Activated naive CD4-positive, alpha-beta T cell treated with anti-CD3 and anti-CD28 coated beads for 36 hours (primary cell): ENCODE measurements at regions of chr11 and their contacts with region 1.

Region 1: DNA sequence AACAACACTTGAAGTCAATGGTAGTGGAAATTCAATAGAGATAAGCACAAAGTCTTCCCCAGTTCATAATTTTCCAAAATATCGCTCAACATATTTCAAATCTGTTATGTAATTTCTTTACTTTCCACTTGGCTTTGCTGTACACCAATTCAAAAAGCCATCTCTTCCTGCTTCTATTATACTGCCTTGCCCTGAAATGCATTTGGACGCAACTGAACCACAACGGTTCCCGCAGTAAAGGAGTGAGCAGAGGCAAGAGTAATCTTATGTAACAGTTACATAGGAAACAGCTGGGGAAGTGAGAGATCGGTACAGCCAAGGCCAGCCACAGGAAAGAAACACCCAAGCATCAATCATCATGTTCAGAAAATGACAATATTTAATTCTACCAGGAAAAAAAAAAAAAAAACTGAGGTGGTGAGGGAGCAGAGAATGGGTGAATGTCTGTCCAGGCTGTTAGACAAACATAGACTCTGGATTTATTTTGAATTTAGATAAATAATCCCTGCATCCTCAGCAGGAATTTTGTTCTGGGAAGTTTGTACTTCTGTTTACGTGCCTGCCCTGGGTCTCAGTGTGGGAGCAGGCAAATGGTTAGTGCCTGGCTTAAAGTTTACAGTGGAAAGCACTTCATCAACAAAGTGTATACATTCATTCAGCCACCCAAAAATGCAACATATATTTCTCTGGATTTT is 392.2 kb downstream of the ETS1 start:
- DNase-seq: peak; percentile 77
- H3K4me3 Mint-ChIP-seq: peak overlapping the region; percentile 6
- H3K27ac Mint-ChIP-seq: peak overlapping the region; percentile 32
- H3K4me1 Mint-ChIP-seq: peaks cover 42% of the 10 kb centered on the region
- H3K27me3 Mint-ChIP-seq: no peaks in the 10 kb centered on the region

Region 2: DNA sequence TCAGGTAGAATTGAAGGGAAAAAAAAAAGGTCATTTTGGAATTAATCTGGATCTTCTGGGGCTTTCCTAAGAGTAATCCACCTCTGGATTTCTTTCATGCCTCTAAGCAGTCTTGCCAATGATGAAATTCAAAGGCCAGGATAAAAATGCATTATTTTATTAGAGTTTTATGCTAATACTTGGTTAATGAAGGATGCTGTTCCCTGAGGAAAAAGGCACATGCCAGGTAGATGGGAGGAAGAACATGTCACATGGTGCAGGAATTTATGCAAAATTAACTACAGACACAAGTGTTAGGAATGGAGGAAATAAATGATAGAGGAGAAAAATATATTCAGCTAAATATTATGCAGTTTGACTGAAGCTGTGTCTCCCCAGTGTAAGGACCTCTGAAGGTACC is 399.9 kb before region 1 on chr11:
- CTCF ChIA-PET with region 1: no interaction called
- intact Hi-C with region 1: no loop called
- DNase-seq: no peak
- H3K4me3 Mint-ChIP-seq: no peak overlapping the region
- H3K27ac Mint-ChIP-seq: no peak overlapping the region
- H3K4me1 Mint-ChIP-seq: no peaks in the 10 kb centered on the region
- H3K27me3 Mint-ChIP-seq: no peaks in the 10 kb centered on the region

Region 3: DNA sequence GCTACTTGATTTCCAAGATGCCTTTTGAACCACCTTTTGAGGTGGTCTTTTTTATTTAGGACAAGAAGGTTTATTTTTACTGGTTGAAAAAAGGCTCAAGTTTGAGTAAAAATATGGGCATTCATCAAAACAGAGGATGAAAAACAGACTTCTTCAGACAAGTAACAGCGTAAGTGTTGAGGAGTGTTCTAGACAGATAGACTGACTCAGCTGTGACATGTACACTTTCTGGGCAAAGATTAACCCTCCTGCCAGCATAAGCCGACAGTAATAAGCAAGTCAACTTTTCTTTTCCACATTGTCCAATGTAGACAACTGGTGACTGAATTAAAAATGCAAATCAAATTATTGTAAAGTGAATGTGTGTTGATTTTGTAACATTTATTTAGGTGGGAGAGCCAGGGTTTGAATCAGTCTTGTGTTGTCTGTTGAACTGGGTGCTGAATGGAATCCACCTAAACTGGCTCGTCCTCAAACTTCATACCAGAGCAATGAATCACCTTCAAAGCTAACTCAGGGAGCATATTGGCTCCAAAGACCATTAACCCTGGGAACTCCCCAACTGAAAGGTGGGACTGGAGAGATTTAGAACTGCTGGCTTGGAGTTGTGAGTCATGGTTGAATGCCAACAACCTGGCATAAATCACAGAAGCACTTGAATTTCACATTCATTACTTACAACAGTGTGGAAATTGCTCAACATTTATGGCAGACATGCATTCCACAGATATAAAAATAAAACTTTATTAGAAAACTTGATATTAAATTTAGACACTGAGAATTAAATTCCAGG is 15.1 kb after region 1 on chr11:
- CTCF ChIA-PET with region 1: no interaction called
- intact Hi-C with region 1: loop called (anchors 1 kb)
- DNase-seq: peak; percentile 46
- H3K4me3 Mint-ChIP-seq: no peak overlapping the region
- H3K27ac Mint-ChIP-seq: no peak overlapping the region
- H3K4me1 Mint-ChIP-seq: peaks cover 17% of the 10 kb centered on the region
- H3K27me3 Mint-ChIP-seq: no peaks in the 10 kb centered on the region

Region 4: DNA sequence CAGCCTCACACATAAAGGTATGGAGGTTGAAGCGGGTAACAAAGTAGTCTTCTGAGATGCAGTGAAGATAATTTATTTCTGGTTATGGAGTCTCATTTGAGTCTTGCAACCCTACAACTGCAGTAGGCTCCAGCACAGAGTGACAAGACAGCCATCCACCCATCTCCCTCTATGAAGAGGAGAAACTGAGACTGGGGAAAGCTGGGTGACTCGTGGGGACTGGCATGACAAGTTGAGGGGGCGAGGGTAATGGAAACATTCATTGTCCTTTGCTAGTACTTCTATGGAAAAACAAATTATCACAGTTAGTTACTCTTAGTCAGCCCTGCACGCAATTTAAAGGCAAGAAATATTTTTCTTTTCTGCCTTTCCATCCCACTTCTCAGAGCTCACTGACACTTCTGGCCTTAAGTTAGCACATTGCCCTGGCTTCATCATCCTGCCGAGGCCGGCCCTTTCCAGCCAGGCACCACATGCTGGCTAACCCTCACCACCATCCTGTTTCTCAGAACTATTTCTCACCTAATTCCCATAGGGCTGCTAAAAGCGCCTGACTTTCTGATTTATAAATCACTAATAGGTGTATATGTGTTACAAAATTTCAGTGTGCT is 31.0 kb after region 1 on chr11:
- CTCF ChIA-PET with region 1: interaction called, 3 read pairs
- intact Hi-C with region 1: loop called (anchors 1 kb)
- DNase-seq: peak; percentile 37
- H3K4me3 Mint-ChIP-seq: no peak overlapping the region
- H3K27ac Mint-ChIP-seq: no peak overlapping the region
- H3K4me1 Mint-ChIP-seq: peaks cover 40% of the 10 kb centered on the region
- H3K27me3 Mint-ChIP-seq: no peaks in the 10 kb centered on the region